OCI-LY7 (cell line): ENCODE measurements at regions of chr4 and their contacts with region 1.

Region 1: GRCh38 chr4:109559983-109560686 is at the start of gene MCUB:
- DNase-seq: peak; percentile 95
- H3K4me3 ChIP-seq: peak within 1 kb of the TSS; percentile 76
- H3K27ac ChIP-seq: peak within 1 kb of the TSS; percentile 87
- H3K4me1 ChIP-seq: peaks cover 44% of the 10 kb centered on the region
- CTCF ChIP-seq: no peak
- total RNA-seq, gene MCUB: 39.1 and 40.3 TPM in 2 replicates

Region 2: GRCh38 chr4:109532182-109532581 is 28.0 kb before region 1 on chr4:
- CTCF ChIA-PET with region 1: no interaction called
- POLR2A ChIA-PET with region 1: no interaction called
- intact Hi-C with region 1: no loop called
- DNase-seq: no peak
- H3K4me3 ChIP-seq: no peak overlapping the region
- H3K27ac ChIP-seq: no peak overlapping the region
- H3K4me1 ChIP-seq: no peaks in the 10 kb centered on the region
- CTCF ChIP-seq: no peak

Region 3: DNA sequence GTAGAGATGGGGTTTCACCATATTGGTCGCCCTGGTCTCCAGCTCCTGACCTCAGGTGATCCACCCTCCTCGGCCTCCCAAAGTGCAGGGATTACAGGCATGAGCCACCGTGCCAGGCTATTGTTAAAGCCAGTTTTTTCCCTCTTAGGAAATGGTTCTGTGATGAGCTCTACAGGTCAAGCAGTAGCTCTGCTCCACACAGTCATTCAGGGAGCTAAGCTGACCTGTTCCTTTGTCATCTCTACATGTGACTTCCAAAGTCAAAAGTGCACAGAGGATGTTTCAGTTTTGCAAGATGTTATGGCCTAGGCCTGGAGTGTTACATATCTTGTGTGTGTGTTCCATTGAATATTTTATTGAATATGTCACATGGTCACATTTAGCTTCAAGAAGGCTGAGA is 11.4 kb after region 1 on chr4:
- CTCF ChIA-PET with region 1: interaction called, 3 read pairs
- POLR2A ChIA-PET with region 1: interaction called, 10 read pairs
- intact Hi-C with region 1: no loop called
- DNase-seq: no peak
- H3K4me3 ChIP-seq: no peak overlapping the region
- H3K27ac ChIP-seq: no peak overlapping the region
- H3K4me1 ChIP-seq: peaks cover 10% of the 10 kb centered on the region
- CTCF ChIP-seq: no peak

Region 4: DNA sequence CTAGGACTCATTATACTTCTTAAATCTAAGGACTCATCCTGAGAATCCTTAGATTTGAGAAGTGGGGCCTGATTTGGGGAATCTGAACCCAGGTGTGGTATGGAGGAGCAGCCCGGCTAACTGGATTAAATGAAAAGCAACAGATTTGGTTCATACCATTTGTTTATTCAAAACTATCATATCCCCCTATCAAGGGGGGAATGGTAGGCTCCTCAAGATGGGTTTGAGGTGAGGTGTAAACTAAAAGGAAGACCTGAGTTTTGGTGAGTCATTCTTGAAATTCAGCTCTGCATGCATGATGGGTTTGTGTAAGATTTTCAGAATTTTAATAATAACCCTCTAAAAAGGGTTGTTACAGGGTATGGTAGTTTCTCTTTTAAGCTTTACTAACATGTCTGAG is 89.7 kb after region 1 on chr4:
- CTCF ChIA-PET with region 1: no interaction called
- POLR2A ChIA-PET with region 1: interaction called, 3 read pairs
- intact Hi-C with region 1: loop called (anchors 5 kb)
- DNase-seq: peak; percentile 6
- H3K4me3 ChIP-seq: no peak overlapping the region
- H3K27ac ChIP-seq: no peak overlapping the region
- H3K4me1 ChIP-seq: no peaks in the 10 kb centered on the region
- CTCF ChIP-seq: no peak

Region 5: GRCh38 chr4:109815151-109816081 is 255.3 kb after region 1 on chr4 and contains the start of gene GAR1:
- CTCF ChIA-PET with region 1: no interaction called
- POLR2A ChIA-PET with region 1: interaction called, 3 read pairs
- intact Hi-C with region 1: loop called (anchors 2 kb)
- DNase-seq: peak; percentile 95
- H3K4me3 ChIP-seq: peak within 1 kb of the TSS; percentile 83
- H3K27ac ChIP-seq: peak within 1 kb of the TSS; percentile 65
- H3K4me1 ChIP-seq: peaks cover 22% of the 10 kb centered on the region
- CTCF ChIP-seq: no peak
- total RNA-seq, gene GAR1: 16.4 and 26.7 TPM in 2 replicates

Region 6: DNA sequence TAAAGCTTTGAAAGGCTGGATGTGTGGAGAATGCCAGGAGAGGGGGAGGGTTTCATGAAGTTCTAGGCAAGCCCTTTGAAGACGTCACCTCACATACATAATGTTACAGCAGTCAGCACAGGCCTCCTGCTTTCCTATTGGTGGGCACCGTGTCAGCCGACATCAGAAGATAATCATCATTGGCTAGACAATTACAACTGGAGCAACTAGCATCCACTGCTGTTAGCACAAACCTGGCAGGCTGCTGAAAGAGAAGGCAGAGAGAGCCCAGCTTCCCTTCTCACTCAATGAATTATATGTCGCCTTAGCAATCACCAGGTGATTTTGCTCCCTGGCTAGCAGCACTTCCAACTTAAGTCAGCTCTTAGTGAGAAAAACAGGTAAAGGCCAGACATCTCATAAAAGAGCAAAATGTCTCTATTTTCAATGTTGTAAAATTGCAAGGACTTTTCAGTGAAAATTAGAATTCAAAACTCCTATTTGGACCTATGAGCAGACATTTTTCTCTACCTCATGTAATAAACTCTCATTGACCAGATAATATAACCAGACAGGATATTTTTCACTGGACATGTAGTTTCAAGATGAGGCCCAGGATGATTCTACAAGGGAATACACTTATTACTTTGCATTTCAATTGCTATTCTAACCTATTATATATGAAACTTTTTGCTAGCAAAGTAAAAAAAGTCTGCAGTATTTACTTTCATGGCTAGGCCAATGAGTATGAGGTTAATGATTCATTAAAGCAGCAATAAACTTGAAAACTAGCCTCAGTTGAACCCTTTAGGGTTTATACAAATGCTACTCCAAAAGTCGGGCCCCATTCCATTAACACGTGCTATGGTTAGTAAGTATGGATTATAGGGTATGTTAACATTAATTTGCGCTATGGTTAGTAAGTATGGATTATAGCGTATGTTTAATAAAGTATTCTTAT is 634.0 kb after region 1 on chr4:
- CTCF ChIA-PET with region 1: no interaction called
- POLR2A ChIA-PET with region 1: no interaction called
- intact Hi-C with region 1: loop called (anchors 10 kb)
- DNase-seq: peak; percentile 92
- H3K4me3 ChIP-seq: peak overlapping the region; percentile 80
- H3K27ac ChIP-seq: peak overlapping the region; percentile 84
- H3K4me1 ChIP-seq: peaks cover 34% of the 10 kb centered on the region
- CTCF ChIP-seq: no peak